ENCODE measurements at regions of chr7 and their contacts with region 1.

Region 1: GRCh38 chr7:90383422-90383821 is 19.8 kb upstream of the CLDN12 start:
- DNase-seq: peak; percentile 54
- H3K4me3 ChIP-seq: peak overlapping the region in 1 of 3 experiments; percentile 3
- H3K27ac ChIP-seq: peak overlapping the region; percentile 68
- H3K4me1 ChIP-seq: peaks cover 36% of the 10 kb centered on the region
- H3K27me3 ChIP-seq: no peaks in the 10 kb centered on the region
- CTCF ChIP-seq: no peak

Region 2: DNA sequence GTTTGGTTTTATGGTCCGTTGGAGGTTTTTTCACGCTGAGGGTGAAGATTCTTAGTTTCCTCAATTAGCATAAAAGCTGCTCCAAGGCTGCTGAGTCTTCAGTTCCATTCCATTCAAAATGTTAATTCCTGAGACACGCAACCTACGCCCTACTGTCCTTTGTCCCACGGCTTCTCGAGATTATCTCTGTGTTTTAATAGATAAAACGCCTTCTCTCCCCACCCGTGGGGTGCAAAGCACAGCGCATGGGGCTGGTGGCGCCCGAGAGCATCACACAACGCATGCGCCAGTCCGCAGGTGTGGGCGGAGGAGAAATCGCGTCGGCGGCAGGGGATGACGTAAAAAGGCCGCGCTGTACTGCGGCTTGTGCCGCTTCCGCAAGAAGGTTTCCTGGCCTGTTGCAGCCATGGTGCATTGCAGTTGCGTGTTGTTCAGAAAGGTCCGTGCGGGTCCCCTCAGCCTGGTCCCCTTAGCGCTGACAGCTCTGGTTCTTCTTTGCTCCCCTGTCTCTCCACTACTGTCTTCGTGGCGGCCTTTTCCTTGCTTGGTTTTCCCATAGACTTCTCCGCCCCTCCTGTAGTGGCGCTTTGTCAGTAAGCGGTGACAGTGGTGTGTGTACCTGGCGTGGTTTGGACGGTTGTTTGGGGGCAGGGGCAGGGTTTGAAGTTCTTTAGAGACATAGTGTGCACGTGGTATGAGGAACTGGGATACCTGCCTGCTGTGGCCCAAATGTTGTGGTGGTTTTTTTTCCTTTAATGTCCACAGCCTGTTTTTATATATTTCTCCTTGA is 36.9 kb before region 1 on chr7 and contains the start of gene GTPBP10:
- CTCF ChIA-PET with region 1: no interaction called
- dilution Hi-C with region 1: no loop called
- in situ Hi-C with region 1: no loop called
- intact Hi-C with region 1: loop called (anchors 5 kb)
- DNase-seq: peak; percentile 90
- H3K4me3 ChIP-seq: peak within 1 kb of the TSS; percentile 76 to 89 (median 84)
- H3K27ac ChIP-seq: peak within 1 kb of the TSS; percentile 84
- H3K4me1 ChIP-seq: peaks cover 12% of the 10 kb centered on the region
- H3K27me3 ChIP-seq: no peaks in the 10 kb centered on the region
- CTCF ChIP-seq: peak; percentile 55 to 83
- total RNA-seq, gene GTPBP10: 12.2 to 35.5 TPM